AG04450 (cell line): ENCODE measurements at regions of chr6 and their contacts with region 1.

Region 1: DNA sequence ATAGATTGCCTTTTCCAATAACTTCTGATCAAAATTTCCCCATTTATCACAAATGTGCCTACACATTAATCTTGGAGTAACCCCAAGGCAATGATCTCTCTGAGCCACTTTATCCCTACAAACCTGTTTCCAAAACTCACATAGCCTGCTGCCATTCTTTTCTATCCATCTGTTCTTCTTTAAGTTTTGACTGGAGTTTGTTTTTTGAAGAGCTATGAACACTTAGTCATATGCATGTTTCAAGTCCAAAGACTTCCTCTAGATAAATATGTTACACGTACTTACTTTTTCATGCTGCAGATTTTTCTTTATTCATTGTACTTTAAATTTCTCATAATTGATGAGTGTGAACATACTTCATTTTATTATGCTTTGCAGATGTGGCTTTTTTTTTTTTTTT is 488.9 kb upstream of the CITED2 start:
- DNase-seq: no peak
- H3K4me3 ChIP-seq: no peak overlapping the region
- H3K27ac ChIP-seq: no peak overlapping the region
- H3K27me3 ChIP-seq: no peaks in the 10 kb centered on the region
- CTCF ChIP-seq: no peak

Region 2: DNA sequence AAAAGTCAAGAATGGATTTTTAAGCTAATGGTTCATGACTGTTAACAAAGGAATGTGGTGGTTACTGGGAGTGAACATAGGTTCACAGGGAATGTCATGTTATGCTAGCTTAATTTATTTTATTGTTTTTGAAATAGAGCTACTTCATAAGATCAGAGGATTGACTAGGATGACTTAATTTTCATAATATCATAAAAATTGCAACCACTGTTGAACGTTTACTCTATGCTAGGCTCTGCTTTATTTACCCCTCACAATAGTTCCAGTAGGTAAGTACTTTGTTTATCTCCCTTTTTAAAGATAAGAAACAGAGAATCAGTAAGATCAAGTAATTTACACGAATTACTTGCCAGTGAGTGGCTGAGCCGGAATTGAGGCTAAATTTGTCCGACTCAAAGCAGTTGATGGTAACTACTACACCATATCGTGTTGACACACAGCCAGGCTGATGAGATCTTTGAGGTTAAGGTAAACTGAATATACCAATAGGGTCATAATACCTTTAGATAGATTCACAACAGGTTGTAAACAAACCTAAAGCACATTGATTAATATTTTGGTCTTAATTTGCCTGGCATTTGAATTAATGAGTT is 294.3 kb before region 1 on chr6:
- CTCF ChIA-PET with region 1: interaction called, 13 read pairs
- POLR2A ChIA-PET with region 1: no interaction called
- DNase-seq: peak; percentile 47
- H3K4me3 ChIP-seq: no peak overlapping the region
- H3K27ac ChIP-seq: peak overlapping the region; percentile 62
- H3K27me3 ChIP-seq: no peaks in the 10 kb centered on the region
- CTCF ChIP-seq: no peak

Region 3: GRCh38 chr6:140070846-140071464 is 207.6 kb after region 1 on chr6:
- CTCF ChIA-PET with region 1: no interaction called
- POLR2A ChIA-PET with region 1: no interaction called
- DNase-seq: no peak
- H3K4me3 ChIP-seq: no peak overlapping the region
- H3K27ac ChIP-seq: peak overlapping the region; percentile 22
- H3K27me3 ChIP-seq: no peaks in the 10 kb centered on the region
- CTCF ChIP-seq: no peak